Calu3 (cell line): ENCODE measurements at regions of chr1 and their contacts with region 1.

Region 1: DNA sequence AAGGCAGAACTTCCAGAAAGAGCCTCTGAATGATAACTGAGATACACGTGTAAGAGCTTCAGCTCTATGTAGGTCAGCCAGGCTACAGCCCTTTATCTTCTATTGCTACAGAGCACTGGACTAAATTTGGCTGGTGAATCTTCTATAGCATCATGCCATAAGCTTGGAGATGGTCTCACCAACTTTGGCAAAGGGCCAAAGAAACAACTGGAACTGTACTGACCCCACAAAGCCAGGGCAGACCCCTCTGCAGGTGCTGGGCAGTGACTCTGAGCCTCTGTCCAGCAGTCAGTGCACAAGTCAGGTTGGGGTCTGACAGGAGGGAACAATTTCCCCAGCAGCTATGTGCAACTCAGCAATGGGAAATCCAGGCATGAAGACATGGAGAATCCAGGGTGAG is 57.8 kb upstream of the NFASC start:
- DNase-seq: no peak
- H3K4me3 Mint-ChIP-seq: no peak overlapping the region
- H3K27ac Mint-ChIP-seq: no peak overlapping the region
- H3K4me1 Mint-ChIP-seq: no peaks in the 10 kb centered on the region
- H3K27me3 Mint-ChIP-seq: peaks cover 68% of the 10 kb centered on the region
- CTCF ChIP-seq: no peak

Region 2: DNA sequence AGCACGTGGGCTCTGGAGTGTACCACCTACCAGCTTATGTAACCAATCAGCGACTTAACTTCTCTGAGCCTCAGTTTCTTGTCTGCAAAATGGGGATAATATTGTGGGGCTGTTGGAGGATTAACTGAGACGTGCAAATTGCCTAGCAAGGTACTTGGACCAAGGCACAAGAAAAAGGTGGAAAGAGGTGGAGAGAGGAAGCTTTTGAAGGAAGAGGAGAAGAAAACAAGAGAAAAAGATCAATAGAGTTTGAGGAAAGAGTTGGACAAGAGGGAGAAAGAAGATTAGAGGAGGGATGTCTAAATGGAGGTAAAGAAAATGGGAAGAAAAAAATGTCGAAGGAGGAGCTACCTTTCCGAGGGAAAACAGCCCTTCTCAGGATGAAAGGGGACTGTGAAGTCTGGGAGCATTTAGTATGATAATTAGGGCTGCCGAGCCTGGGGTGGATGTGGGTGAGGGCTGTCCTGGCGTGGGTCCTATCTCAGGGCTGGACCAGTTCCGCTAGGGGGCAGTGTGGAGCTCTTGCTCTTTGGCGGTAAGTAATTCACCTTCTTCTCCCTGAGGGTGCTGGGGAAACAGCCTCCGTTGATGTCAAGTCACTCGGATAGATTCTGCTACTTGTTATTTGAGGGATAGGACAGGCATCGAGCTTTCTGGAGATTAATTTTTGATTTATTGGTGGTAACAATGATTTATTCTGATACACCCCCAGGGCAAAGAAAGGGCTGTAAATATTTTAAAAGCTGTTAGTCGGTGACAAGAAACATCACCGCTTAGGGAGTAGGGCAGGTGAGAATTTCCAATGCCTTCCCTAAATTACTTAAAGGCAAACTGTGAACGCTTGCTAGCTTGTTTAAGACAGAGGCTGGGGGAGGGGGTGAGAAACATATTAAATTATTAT is 21.1 kb before region 1 on chr1:
- CTCF ChIA-PET with region 1: interaction called, 16 read pairs
- intact Hi-C with region 1: no loop called
- DNase-seq: peak; percentile 87
- H3K4me3 Mint-ChIP-seq: no peak overlapping the region
- H3K27ac Mint-ChIP-seq: no peak overlapping the region
- H3K4me1 Mint-ChIP-seq: peaks cover 9% of the 10 kb centered on the region
- H3K27me3 Mint-ChIP-seq: peaks cover 92% of the 10 kb centered on the region
- CTCF ChIP-seq: peak; percentile 91

Region 3: GRCh38 chr1:204868340-204868700 is 55.5 kb after region 1 on chr1:
- CTCF ChIA-PET with region 1: no interaction called
- intact Hi-C with region 1: no loop called
- DNase-seq: no peak
- H3K4me3 Mint-ChIP-seq: no peak overlapping the region
- H3K27ac Mint-ChIP-seq: no peak overlapping the region
- H3K4me1 Mint-ChIP-seq: no peaks in the 10 kb centered on the region
- H3K27me3 Mint-ChIP-seq: peaks cover 100% of the 10 kb centered on the region
- CTCF ChIP-seq: no peak

Region 4: DNA sequence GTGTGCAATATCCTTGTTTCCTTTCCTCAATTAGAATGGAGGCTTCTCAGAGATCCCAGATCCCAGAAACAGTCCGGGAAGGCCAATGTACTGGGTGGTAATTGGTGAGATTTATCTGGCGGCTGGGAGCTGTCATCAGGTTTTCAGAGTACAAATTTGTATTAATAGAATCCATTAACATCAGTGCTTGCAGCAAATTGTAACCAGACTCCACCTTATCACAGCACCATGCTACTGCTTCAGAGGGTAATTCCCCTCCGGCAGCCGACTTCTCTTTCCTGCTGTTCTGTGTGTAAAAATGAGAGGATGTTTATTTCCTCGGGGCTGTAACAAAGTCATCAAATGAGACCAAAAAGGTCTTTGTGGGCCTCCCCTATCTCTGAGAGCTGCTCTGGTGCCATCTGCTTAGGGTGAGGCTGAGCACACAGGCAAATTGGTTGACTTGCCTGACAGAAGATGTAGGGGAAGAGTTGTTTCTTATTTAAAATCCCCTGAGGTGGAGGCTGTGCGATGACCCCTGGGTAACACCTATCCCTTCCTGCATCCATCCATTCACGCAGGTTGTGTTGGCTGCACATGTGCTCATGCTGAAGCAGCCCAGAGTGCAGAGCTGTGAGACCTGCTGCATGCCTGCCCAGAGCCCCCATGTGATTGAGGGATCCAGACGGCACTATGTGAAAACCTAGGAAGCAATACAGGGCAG is 77.0 kb after region 1 on chr1:
- CTCF ChIA-PET with region 1: no interaction called
- intact Hi-C with region 1: no loop called
- DNase-seq: peak; percentile 16
- H3K4me3 Mint-ChIP-seq: no peak overlapping the region
- H3K27ac Mint-ChIP-seq: no peak overlapping the region
- H3K4me1 Mint-ChIP-seq: no peaks in the 10 kb centered on the region
- H3K27me3 Mint-ChIP-seq: peaks cover 90% of the 10 kb centered on the region
- CTCF ChIP-seq: no peak